HEK293T (cell line): ENCODE measurements at regions of chr7 and their contacts with region 1.

Region 1: DNA sequence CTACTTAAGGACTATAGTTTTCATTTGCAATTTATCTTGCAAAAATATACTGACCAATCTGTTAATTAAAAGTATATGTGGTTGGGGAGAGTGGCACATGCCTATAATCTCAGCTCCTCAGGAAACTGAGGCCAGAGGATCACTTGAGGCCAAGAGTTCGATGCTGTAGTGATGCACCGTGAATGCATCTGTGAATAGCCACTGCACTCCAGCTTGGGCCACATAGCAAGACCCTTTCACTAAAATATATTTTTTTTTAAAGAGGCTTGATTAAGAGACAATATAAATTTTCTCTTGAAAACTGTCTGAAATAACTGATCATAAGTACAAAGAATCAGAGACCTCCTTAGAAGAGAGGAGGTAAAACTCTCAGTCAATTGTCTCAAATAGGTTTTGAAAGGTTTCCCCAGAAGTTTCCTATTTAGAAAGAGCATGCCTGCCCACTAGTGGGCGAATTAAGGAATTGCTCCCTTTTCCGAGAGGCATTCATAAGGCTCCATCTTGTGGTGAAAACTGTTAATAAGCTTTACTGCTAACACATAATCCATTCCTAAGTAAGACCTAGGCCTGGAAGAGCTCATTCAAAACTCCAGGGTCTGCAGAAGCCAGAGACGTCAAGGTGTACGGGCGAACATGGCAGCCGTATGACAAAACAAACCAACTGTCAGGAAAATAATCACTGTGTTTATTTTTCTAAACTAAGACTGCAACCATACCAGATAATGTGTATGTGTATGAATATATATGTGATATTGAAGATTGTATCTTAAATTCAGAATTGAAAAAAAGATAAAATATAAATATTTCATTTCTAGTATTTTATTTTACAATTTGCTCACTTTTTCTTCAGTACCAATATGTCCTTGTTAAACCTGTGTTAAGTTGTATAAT is 6.8 kb upstream of the TAS2R40 start:
- DNase-seq: peak; percentile 84

Region 2: DNA sequence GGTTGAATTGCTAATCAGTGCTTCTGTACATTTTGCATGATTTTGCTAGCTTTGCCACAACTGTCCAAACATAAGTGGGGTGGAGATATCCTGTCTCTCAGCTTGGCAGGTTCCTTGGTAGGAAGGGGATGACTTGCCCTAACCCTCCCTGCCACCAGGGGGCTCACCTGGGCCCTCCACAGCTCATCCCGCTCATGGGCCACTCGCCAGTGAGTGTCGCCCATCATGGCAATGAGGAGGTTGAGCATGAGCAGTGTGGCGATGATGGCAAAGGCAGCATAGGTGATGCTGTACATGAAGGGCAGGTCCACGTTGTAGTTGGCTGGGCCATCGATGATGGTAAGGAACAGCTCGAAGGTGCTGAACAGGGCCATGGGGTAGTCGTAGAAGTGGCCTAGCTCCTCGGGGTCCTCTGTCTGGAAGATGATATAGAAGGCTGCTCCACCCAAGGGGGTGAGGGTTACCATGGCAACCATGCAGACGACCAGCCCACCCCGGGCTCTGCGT is 341.7 kb before region 1 on chr7:
- CTCF ChIA-PET with region 1: interaction called, 22 read pairs
- POLR2A ChIA-PET with region 1: no interaction called
- DNase-seq: peak; percentile 73

Region 3: DNA sequence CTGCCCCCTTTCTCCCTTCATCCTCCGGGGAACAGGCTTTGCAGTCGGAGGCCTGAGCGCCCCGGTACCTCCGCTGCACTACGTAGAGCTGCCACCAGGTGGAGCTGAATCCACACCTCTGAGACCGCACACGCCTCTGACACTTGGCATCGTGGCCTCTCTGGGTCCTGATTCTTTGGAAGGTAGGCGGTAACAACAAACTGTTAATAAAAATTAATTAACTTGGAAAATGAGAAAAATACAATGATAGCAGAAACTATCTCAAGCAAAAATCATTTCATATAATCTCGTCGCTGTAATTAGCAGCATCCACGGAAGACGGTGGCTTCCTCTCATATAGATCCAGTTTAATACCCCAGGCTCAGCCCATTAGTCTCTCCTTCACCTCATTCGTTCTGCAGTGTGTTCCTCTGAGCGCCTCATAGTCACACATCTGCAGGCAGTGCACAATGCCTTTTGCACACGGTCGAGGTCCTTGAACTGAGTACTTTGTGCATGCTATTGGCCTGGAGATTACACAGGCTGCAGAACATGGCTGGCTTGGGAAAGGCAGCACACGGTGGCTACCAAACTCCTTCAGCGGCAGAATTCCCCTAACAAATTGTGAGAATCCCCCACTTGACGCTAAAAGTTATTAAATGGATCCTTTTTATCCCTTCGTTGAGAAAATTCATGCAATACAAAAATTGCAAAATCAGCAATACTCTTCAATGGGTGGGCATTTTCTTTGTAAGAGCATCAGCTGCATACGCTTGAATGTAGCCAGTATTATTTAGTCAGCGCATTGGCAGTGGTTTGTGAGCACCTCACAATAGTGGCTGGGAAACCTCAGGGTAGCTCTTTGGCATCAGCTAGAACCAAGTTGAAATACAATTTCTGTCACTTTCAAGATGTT is 206.8 kb before region 1 on chr7:
- CTCF ChIA-PET with region 1: interaction called, 19 read pairs
- POLR2A ChIA-PET with region 1: no interaction called
- DNase-seq: peak; percentile 59

Region 4: DNA sequence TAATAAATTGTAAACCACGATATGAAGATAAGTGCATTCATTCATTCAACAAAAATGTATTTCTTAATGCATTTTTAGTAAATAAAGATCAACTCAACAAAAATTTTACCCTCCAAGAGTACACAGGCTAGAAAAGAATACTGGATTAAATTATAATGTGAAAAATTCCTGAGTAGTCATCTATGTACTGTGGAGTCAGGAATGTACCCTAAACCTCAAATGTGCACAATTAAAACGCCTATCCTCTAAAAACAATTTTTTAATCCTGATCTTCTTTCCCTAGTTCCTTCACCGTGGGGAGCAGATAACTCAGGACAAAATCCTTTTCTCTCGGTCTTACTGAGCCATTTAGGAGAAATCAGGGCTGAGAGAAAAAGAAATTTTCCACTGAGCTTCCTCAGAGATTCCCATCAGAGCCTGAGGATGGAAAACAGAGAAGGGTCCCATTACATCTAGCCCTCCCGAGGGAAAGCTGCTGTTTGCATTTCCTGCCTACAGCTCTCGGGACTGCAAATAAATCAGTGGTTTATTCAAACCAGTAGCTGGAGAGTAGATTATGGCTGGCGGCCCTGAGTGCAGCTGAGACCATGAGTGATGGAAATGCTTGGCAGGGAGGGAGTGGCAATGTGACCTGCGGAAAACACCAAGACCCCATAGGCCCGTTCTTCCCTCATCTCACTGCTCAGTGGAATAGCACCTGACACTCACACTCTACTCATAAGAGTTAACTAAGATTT is 14.2 kb after region 1 on chr7:
- CTCF ChIA-PET with region 1: interaction called, 13 read pairs
- POLR2A ChIA-PET with region 1: no interaction called
- DNase-seq: no peak

Region 5: GRCh38 chr7:143263266-143264195 is 48.5 kb after region 1 on chr7 and contains the start of gene GSTK1:
- CTCF ChIA-PET with region 1: no interaction called
- POLR2A ChIA-PET with region 1: no interaction called
- DNase-seq: peak; percentile 90

Region 6: GRCh38 chr7:143331179-143331820 is 116.3 kb after region 1 on chr7:
- CTCF ChIA-PET with region 1: no interaction called
- POLR2A ChIA-PET with region 1: no interaction called
- DNase-seq: no peak